ENCODE measurements at regions of chr10 and their contacts with region 1.

Region 1: GRCh38 chr10:17257466-17258321 is 29.7 kb downstream of the VIM start:
- DNase-seq: peak; percentile 68
- H3K4me3 Mint-ChIP-seq: peak overlapping the region; percentile 9
- H3K27ac Mint-ChIP-seq: no peak overlapping the region
- H3K4me1 Mint-ChIP-seq: peaks cover 14% of the 10 kb centered on the region
- H3K27me3 Mint-ChIP-seq: peaks cover 16% of the 10 kb centered on the region

Region 2: DNA sequence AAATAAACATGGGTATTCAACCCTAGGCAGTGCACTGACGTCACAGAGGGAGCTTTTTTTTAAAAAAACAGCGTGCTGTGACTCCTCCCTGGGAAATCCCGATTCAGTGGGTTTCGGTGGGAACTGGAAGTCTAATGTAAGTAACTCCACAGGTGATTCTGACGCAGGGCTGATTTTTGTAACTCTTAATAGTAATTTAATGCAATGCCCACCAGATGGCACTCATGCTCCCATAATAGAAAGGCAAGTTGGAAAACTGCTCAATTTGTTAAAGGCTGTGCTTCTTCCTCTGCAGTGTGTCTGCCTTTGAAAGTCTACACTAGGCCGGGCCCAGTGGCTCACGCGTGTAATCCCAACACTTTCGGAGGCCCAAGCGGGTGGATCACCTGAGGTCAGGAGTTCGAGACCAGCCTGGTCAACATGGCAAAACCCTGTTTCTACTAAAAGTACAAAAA is 429.6 kb before region 1 on chr10:
- CTCF ChIA-PET with region 1: interaction called, 10 read pairs
- DNase-seq: peak; percentile 74
- H3K4me3 Mint-ChIP-seq: no peak overlapping the region
- H3K27ac Mint-ChIP-seq: no peak overlapping the region
- H3K4me1 Mint-ChIP-seq: peaks cover 11% of the 10 kb centered on the region
- H3K27me3 Mint-ChIP-seq: peaks cover 5% of the 10 kb centered on the region

Region 3: GRCh38 chr10:16843252-16843870 is 414.3 kb before region 1 on chr10:
- CTCF ChIA-PET with region 1: interaction called, 11 read pairs
- DNase-seq: no peak
- H3K4me3 Mint-ChIP-seq: no peak overlapping the region
- H3K27ac Mint-ChIP-seq: no peak overlapping the region
- H3K4me1 Mint-ChIP-seq: peaks cover 4% of the 10 kb centered on the region
- H3K27me3 Mint-ChIP-seq: peaks cover 9% of the 10 kb centered on the region